PC-3 (cell line): ENCODE measurements at regions of chr15 and their contacts with region 1.

Region 1: DNA sequence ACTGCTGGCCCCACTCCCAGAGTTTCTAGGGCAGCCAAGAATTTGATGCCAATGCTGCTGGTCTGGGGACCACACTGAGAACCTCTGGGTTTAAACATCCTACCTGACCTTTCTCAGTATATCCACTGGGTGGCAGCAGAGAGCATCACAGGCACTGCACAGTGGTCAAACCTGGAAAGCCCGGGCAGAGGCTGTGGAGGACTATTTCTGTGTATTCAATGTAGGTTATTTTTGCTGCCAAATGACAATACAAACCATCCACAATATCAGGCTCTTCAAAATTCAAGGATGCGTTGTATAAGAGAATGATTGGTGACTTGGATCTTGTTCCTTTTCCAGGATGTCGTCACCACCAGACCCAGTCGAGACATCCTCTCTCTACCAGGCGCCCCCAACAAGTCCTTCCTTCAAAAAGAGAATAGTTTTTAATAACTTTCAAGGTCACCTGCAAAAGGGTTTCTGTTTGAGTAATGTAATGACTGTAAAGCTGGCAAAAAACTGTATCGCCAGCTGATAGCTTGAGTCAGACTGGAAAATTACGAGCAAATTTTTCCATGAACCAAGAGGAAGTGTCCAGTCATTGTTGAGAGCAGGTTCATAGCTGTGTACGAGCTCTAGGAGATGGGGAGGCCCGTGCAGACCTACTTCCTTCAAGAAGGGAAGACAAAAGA is 30.5 kb upstream of the MYZAP start:
- DNase-seq: peak; percentile 78
- ATAC-seq: peak; percentile 91
- H3K4me3 ChIP-seq: no peak overlapping the region; the same call in 1 of the 2 replicates
- H3K27ac ChIP-seq: peak overlapping the region; percentile 90
- H3K4me1 ChIP-seq: peaks cover 29% of the 10 kb centered on the region
- H3K27me3 ChIP-seq: no peaks in the 10 kb centered on the region
- CTCF ChIP-seq: peak; percentile 88

Region 2: GRCh38 chr15:57323806-57324589 is 237.2 kb before region 1 on chr15:
- CTCF ChIA-PET with region 1: no interaction called
- POLR2A ChIA-PET with region 1: no interaction called
- intact Hi-C with region 1: no loop called
- DNase-seq: peak; percentile 64
- ATAC-seq: peak; percentile 95
- H3K4me3 ChIP-seq: no peak overlapping the region
- H3K27ac ChIP-seq: 0 out of 2 replicates have a peak overlapping the region, but pooled peaks have one; percentile 18
- H3K4me1 ChIP-seq: peaks cover 9% of the 10 kb centered on the region
- H3K27me3 ChIP-seq: no peaks in the 10 kb centered on the region
- CTCF ChIP-seq: no peak

Region 3: DNA sequence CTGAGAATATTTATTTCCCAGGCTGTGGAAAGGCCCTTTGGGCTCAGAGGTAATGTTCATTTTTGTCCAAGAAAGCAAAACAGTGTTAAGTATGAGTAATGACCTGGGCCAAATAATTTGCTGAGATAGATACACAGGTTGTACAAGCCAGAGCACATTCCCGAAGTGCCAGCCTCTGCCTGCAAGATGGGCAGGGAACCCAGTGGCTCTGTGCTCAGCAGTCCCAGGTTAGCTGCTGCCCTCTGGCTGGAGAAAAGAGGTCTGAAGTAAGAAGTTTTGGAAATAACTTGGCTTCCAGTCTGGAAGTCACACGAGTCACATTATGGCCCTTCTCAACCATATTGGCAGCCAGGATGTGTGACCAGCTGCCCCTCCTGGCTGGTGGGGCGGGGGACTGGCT is 50.8 kb after region 1 on chr15:
- CTCF ChIA-PET with region 1: interaction called, 4 read pairs
- POLR2A ChIA-PET with region 1: no interaction called
- intact Hi-C with region 1: loop called (anchors 1 kb)
- DNase-seq: peak; percentile 84
- ATAC-seq: peak; percentile 54
- H3K4me3 ChIP-seq: no peak overlapping the region
- H3K27ac ChIP-seq: peak overlapping the region; percentile 95
- H3K4me1 ChIP-seq: peaks cover 67% of the 10 kb centered on the region
- H3K27me3 ChIP-seq: no peaks in the 10 kb centered on the region
- CTCF ChIP-seq: peak; percentile 71

Region 4: DNA sequence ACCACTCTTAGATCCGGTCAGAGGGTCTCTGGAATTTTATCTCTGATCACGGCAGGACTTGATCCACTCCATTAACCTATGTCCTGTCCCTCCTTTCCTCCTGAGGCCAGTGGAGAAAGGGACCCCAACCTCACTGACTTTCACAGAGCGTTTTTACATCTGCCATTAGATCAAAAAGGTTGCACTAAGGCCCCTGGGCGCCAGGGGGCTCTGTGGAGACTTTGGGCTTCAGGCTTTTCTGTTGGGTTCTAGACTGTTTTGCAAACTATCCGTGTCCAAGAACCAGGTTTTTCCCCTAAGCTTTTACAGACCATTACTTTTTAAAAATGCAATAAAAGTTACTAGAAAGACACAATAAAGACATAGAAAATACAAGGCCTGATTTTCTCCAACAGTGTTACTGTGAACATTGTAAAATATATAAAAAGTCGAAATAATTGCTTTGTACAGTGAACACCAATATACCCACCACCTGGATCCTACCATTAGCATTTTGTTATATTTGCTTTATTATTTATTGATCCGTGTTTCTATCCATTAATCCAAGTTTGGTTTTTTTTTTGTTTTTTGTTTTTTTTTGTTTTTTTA is 305.1 kb after region 1 on chr15:
- CTCF ChIA-PET with region 1: no interaction called
- POLR2A ChIA-PET with region 1: no interaction called
- intact Hi-C with region 1: no loop called
- DNase-seq: peak; percentile 69
- ATAC-seq: no peak; the same call in 1 of the 2 replicates
- H3K4me3 ChIP-seq: no peak overlapping the region
- H3K27ac ChIP-seq: no peak overlapping the region
- H3K4me1 ChIP-seq: no peaks in the 10 kb centered on the region
- H3K27me3 ChIP-seq: no peaks in the 10 kb centered on the region
- CTCF ChIP-seq: peak; percentile 80